Caco-2 (cell line): ENCODE measurements at regions of chr12 and their contacts with region 1.

Region 1: DNA sequence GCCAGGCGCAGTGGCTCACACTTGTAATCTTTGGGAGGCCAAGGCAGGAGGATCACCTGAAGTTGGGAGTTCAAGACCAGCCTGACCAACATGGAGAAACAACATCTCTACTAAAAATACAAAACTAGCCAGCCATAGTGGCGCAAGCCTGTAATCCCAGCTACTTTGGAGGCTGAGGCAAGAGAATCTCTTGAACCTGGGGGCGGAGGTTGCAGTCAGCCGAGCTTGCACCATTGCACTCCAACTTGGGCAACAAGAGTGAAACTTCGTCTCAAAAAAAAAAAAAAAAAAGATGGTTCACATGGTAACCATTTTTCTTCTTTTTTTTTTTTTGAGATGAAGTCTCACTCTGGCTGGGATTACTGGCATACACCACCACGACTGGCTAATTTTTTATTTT is 35.3 kb downstream of the SLC2A14 start:
- DNase-seq: no peak
- H3K4me3 ChIP-seq: no peak overlapping the region
- H3K4me3 Mint-ChIP-seq: no peak overlapping the region
- H3K27ac Mint-ChIP-seq: no peak overlapping the region
- H3K4me1 ChIP-seq: peaks cover 74% of the 10 kb centered on the region
- H3K4me1 Mint-ChIP-seq: peaks cover 53% of the 10 kb centered on the region
- H3K27me3 ChIP-seq: no peaks in the 10 kb centered on the region
- H3K27me3 Mint-ChIP-seq: no peaks in the 10 kb centered on the region
- CTCF ChIP-seq: no peak

Region 2: DNA sequence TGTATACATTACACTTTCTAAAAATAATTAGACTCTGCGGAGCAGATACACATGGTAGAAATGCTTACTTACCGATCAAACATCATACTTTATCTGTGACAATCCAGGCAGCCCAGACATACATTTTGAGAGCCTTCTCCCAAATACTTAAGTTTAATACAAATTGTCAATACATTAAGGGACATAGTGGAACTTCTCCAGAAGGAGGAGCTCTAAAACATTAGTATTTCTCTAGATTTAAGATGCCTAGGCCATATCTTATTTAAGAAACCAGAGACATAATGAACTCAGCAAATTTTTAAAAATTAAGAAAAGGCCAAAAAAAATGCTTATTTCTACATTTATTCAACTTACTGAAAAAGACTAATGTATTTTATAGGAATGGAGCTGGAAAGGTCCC is 517.4 kb before region 1 on chr12:
- CTCF ChIA-PET with region 1: no interaction called
- POLR2A ChIA-PET with region 1: no interaction called
- intact Hi-C with region 1: no loop called
- DNase-seq: no peak
- H3K4me3 ChIP-seq: no peak overlapping the region
- H3K4me3 Mint-ChIP-seq: no peak overlapping the region
- H3K27ac Mint-ChIP-seq: no peak overlapping the region
- H3K4me1 ChIP-seq: no peaks in the 10 kb centered on the region
- H3K4me1 Mint-ChIP-seq: no peaks in the 10 kb centered on the region
- H3K27me3 ChIP-seq: no peaks in the 10 kb centered on the region
- H3K27me3 Mint-ChIP-seq: peaks cover 12% of the 10 kb centered on the region
- CTCF ChIP-seq: no peak

Region 3: DNA sequence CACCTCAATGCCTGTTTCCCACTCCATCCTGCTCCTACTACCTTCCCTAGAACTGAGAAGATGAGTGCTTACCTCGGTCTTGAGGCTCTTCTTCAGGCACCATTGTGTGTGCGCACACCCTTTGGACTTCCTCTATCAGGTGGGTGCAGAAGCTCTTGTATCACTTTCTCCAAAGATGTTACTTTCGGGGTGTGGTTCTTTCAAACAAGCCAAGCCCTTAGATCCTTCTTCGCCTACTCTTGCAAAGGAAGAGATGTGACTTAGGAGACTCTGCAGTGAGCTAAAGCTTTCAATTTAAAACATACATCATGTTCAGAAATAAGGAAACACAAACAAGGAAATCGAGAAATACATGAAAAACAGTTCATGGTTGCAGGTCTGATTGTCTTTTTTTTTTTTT is 90.1 kb before region 1 on chr12 and contains the start of gene CLEC4C:
- CTCF ChIA-PET with region 1: no interaction called
- POLR2A ChIA-PET with region 1: interaction called, 10 read pairs
- intact Hi-C with region 1: no loop called
- DNase-seq: no peak
- H3K4me3 ChIP-seq: no peak within 1 kb of the TSS
- H3K4me3 Mint-ChIP-seq: no peak within 1 kb of the TSS
- H3K27ac Mint-ChIP-seq: no peak within 1 kb of the TSS
- H3K4me1 ChIP-seq: no peaks in the 10 kb centered on the region
- H3K4me1 Mint-ChIP-seq: peaks cover 7% of the 10 kb centered on the region
- H3K27me3 ChIP-seq: no peaks in the 10 kb centered on the region
- H3K27me3 Mint-ChIP-seq: no peaks in the 10 kb centered on the region
- CTCF ChIP-seq: no peak
- total RNA-seq, gene CLEC4C: not detected in 2 replicates

Region 4: GRCh38 chr12:7769999-7770398 is 67.4 kb before region 1 on chr12:
- CTCF ChIA-PET with region 1: no interaction called
- POLR2A ChIA-PET with region 1: no interaction called
- intact Hi-C with region 1: no loop called
- DNase-seq: no peak
- H3K4me3 ChIP-seq: no peak overlapping the region
- H3K4me3 Mint-ChIP-seq: no peak overlapping the region
- H3K27ac Mint-ChIP-seq: no peak overlapping the region
- H3K4me1 ChIP-seq: no peaks in the 10 kb centered on the region
- H3K4me1 Mint-ChIP-seq: peaks cover 6% of the 10 kb centered on the region
- H3K27me3 ChIP-seq: no peaks in the 10 kb centered on the region
- H3K27me3 Mint-ChIP-seq: no peaks in the 10 kb centered on the region
- CTCF ChIP-seq: no peak

Region 5: GRCh38 chr12:7787574-7788300 is 49.6 kb before region 1 on chr12:
- CTCF ChIA-PET with region 1: no interaction called
- POLR2A ChIA-PET with region 1: no interaction called
- intact Hi-C with region 1: no loop called
- DNase-seq: no peak
- H3K4me3 ChIP-seq: no peak overlapping the region
- H3K4me3 Mint-ChIP-seq: no peak overlapping the region
- H3K27ac Mint-ChIP-seq: no peak overlapping the region
- H3K4me1 ChIP-seq: peaks cover 6% of the 10 kb centered on the region; the same call in 1 of the 2 replicates
- H3K4me1 Mint-ChIP-seq: peaks cover 14% of the 10 kb centered on the region
- H3K27me3 ChIP-seq: no peaks in the 10 kb centered on the region
- H3K27me3 Mint-ChIP-seq: no peaks in the 10 kb centered on the region
- CTCF ChIP-seq: no peak

Region 6: DNA sequence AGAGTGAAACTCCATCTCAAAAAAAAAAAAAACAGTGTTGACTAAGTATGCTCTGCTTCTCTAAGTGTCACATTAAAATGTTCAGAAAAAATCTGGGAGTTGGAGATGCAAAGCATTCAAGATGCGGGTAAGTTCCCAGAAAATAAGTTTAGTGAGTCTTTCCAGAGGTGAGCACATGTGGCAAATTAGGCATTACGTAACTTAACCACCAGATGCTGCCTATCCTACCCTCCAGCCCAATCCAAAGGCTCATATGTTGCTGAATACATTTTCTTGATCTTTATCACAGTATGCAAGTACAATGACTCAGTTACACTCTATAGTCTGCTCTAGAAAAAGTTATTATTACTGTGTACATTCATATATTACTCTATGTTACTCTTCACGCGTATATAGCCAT is 31.8 kb after region 1 on chr12:
- CTCF ChIA-PET with region 1: no interaction called
- POLR2A ChIA-PET with region 1: no interaction called
- intact Hi-C with region 1: no loop called
- DNase-seq: no peak
- H3K4me3 ChIP-seq: no peak overlapping the region
- H3K4me3 Mint-ChIP-seq: no peak overlapping the region
- H3K27ac Mint-ChIP-seq: no peak overlapping the region
- H3K4me1 ChIP-seq: peaks cover 18% of the 10 kb centered on the region
- H3K4me1 Mint-ChIP-seq: peaks cover 13% of the 10 kb centered on the region
- H3K27me3 ChIP-seq: no peaks in the 10 kb centered on the region
- H3K27me3 Mint-ChIP-seq: no peaks in the 10 kb centered on the region
- CTCF ChIP-seq: no peak